ENCODE measurements at regions of chr13 and their contacts with region 1.

Region 1: DNA sequence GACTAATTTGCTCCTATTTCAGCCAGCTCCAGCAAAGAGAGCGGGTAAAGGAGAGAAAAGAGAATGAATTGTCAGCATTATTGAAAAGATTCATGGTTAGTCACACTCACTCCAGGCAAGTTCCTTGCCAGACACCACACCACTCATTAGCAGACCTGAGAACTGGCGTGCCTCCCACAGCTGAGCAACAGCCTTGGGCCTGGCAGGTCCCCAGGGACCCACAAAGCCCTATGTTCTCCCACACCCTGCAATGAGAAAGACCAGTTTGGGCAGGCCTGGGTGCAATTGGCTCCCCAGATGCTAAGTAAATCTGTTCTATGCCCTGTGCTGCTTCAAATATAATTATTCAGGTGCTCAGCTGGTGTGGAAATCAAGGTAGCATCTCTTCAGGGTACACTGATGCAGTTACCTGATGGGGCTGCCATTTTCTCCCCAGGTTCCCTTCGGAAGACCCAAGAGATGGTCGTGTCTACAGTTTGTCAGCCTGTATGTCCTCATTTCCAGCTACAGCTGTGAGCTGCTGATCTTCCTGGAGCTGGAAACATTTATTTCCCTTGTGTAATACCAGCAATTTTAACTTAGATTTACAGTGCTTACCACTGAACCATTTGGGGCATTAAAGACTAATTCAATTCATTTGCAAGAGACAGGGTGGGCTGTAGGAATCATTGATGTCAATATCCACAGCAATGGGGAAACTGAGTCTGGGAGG is 405.0 kb downstream of the COG6 start:
- DNase-seq: no peak
- H3K4me3 ChIP-seq: peak overlapping the region in 1 of 4 donors; percentile 7
- H3K27ac ChIP-seq: peak overlapping the region; percentile 79 to 87 (median 82)
- H3K4me1 ChIP-seq: peaks cover 18 to 77% (median 25%) of the 10 kb centered on the region in 3 donors
- H3K27me3 ChIP-seq: no peaks in the 10 kb centered on the region
- CTCF ChIP-seq: no peak
- POLR2A ChIP-seq: no peak

Region 2: GRCh38 chr13:40666045-40666904 is 605.8 kb after region 1 on chr13 and contains the start of gene FOXO1:
- intact Hi-C with region 1: loop called (anchors 5 kb)
- DNase-seq: peak; percentile 45
- H3K4me3 ChIP-seq: peak within 1 kb of the TSS; percentile 77 to 97 (median 91)
- H3K27ac ChIP-seq: peak within 1 kb of the TSS; percentile 99
- H3K4me1 ChIP-seq: peaks cover 0 to 47% (median 8%) of the 10 kb centered on the region in 3 donors
- H3K27me3 ChIP-seq: no peaks in the 10 kb centered on the region
- CTCF ChIP-seq: peak in 2 of 6 experiments; percentile 20 to 21
- POLR2A ChIP-seq: peak in 3 of 4 donors; percentile 30 to 99 (median 99)
- total RNA-seq, gene FOXO1: 9.1 to 42.3 (median 14.2) TPM

Measured in esophagus squamous epithelium (tissue), 5 donors.